ENCODE measurements at regions of chr6 and their contacts with region 1.

Region 1: DNA sequence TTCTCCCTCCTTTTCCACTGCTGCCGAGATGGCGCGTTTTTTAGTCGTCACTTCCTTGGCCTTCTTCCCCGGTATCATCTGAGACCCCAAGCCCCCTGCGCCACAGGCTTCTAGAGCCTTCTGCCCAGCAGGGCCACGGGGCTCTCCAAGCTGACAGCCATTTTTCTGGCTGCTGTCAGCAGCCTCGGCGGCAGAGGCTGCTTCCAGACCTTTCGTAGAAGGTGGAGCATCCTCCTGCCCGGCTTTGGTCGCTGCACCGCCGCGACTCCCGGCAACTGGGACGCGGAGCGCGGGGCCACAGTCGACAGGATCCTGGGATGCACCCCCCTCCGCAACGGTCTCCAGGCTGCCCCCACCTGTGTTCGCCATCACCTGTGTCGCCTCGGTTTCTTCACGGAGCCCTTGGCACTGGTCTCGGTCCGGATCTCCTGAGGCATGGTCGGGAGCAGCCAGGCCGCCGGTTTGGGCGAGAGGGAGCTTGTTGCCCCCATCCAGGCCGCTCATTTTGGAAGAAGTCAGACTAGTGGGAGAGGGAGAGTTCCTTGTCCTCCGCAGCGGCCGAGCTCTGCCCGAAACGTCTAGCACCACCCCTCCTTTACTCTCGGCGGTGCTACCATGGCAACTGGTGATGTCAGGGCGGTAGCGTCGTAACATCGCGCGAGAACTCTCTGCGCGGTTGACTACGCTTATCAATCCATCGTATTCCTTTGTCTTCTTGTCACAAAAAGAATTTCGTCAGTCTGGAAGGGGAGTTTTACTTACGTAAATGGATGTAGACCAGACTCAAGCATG is at the start of gene TSPYL4:
- DNase-seq: peak; percentile 97
- ATAC-seq: peak; percentile 98
- total RNA-seq, gene TSPYL4: 27.4 TPM

Region 2: GRCh38 chr6:116279260-116280063 is 25.8 kb after region 1 on chr6 and contains the start of gene TSPYL1:
- intact Hi-C with region 1: loop called (anchors 2 kb)
- DNase-seq: peak; percentile 96
- ATAC-seq: peak; percentile 98
- total RNA-seq, gene TSPYL1: 80.6 TPM